WTC11 (cell line): ENCODE measurements at regions of chr14 and their contacts with region 1.

Region 1: DNA sequence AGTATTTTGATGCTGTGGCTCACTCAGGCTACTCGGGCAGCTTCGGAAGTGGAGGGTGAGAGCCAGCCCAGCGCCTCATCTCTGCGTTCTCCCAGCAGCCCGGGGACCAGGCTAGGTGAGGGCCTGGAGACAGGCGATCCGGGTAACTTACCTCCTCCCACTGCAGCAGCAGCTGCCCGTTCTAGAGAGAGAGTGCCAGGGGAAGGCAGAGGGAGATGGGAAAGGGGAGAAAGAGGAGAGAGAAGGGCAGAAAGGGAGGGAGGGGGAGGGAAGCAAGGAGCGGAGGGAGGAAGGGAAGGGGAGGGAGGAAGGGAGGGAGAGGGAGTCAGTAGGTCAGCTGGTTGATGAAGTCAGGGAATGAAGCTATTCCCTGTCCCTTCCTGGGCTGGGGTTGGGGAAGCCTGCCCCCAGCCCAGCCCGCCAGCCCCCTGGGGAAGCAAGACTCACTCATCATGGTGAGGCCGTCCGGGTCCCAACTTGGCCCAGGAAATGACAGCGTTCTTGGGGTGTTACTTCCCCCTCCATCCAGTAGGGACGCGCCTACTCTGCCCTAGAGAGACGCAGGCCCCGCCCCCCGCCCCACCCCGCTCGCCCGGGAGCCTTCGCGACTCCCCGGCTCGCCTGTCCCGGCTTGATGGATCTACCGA is at the start of gene IFI27L2:
- DNase-seq: peak; percentile 76
- ATAC-seq: peak; percentile 86
- H3K4me3 Mint-ChIP-seq: peak within 1 kb of the TSS; percentile 75
- H3K27ac Mint-ChIP-seq: peak within 1 kb of the TSS; percentile 86
- H3K4me1 Mint-ChIP-seq: peaks cover 11% of the 10 kb centered on the region
- H3K27me3 Mint-ChIP-seq: peaks cover 8% of the 10 kb centered on the region
- CTCF ChIP-seq: peak; percentile 19; the same call in 1 of the 2 replicates
- total RNA-seq, gene IFI27L2: 22.1 to 37.2 TPM (median 35.5 TPM) in 3 replicates

Region 2: DNA sequence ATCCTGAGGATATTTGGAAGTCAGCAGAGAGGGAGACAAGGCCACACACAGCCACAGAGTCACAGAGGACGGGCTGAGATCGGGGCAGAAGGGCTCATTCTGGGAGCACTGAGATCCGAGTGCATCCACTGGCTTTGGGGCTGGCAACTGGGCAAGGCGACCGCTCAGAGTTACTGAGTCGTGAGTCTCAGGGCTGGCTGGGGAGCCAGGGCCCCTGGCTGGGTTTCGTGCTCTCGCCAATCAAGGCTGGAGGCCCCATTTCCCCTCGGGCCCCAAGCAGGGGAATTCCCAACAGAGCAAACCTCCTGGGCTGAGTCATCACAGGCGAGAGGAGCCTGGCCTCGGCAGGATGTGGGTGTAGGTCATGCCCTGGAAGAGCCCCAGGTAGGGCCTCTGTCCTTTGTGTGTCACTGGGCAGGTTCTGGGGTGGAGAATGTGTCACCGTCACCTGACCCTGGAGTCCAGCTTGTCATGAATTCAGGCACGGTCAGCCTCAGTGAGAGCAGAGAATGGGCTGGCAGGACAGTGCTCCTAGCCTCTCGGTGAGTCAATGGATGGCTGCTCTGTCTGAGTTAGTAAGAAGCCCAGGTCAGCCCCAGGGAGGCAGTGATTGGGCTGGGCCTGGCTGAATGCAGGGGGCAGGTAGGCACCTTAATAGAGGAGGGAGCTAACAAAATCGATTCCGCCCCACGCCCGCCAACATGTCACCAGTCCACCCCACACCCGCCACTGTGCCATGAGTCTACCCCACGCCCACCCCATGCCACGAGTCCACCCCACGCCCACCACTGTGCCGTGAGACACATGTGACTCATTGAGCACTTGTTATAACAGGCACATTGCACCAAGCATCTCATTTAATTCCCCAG is 169.8 kb before region 1 on chr14:
- CTCF ChIA-PET with region 1: no interaction called
- POLR2A ChIA-PET with region 1: no interaction called
- DNase-seq: no peak
- ATAC-seq: peak; percentile 63
- H3K4me3 Mint-ChIP-seq: no peak overlapping the region
- H3K27ac Mint-ChIP-seq: peak overlapping the region; percentile 76; the same call in 1 of the 2 replicates
- H3K4me1 Mint-ChIP-seq: peaks cover 25% of the 10 kb centered on the region
- H3K27me3 Mint-ChIP-seq: no peaks in the 10 kb centered on the region
- CTCF ChIP-seq: no peak

Region 3: DNA sequence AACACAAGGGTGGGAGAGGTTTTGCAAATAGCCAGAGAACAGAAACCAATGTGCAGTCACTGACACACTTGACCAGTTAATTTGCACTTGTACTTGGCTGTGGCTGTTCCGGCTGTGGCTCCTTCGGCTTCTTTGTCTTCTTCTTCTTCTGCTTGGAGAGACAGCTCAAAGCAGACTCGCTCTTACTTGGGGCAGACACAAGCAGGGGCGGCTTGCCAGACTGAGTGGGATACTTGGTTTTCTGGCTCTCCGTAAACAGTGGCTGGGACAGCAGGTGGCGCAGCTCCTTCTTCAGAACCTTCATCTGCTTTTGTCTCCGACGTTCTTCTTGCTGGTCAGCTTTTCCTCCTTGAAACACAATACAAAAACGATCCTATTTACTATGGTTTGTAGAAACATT is 78.1 kb before region 1 on chr14:
- CTCF ChIA-PET with region 1: interaction called, 13 read pairs
- POLR2A ChIA-PET with region 1: interaction called, 3 read pairs
- DNase-seq: peak; percentile 50
- ATAC-seq: peak; percentile 81
- H3K4me3 Mint-ChIP-seq: no peak overlapping the region
- H3K27ac Mint-ChIP-seq: peak overlapping the region; percentile 17; the same call in 1 of the 2 replicates
- H3K4me1 Mint-ChIP-seq: peaks cover 11% of the 10 kb centered on the region
- H3K27me3 Mint-ChIP-seq: no peaks in the 10 kb centered on the region
- CTCF ChIP-seq: no peak

Region 4: GRCh38 chr14:94143239-94143638 is 14.0 kb after region 1 on chr14:
- CTCF ChIA-PET with region 1: interaction called, 22 read pairs
- POLR2A ChIA-PET with region 1: no interaction called
- DNase-seq: peak; percentile 62
- ATAC-seq: peak; percentile 78
- H3K4me3 Mint-ChIP-seq: no peak overlapping the region
- H3K27ac Mint-ChIP-seq: no peak overlapping the region
- H3K4me1 Mint-ChIP-seq: peaks cover 25% of the 10 kb centered on the region
- H3K27me3 Mint-ChIP-seq: no peaks in the 10 kb centered on the region
- CTCF ChIP-seq: 0 out of 2 replicates have a peak, but pooled peaks have one; percentile 15

Region 5: DNA sequence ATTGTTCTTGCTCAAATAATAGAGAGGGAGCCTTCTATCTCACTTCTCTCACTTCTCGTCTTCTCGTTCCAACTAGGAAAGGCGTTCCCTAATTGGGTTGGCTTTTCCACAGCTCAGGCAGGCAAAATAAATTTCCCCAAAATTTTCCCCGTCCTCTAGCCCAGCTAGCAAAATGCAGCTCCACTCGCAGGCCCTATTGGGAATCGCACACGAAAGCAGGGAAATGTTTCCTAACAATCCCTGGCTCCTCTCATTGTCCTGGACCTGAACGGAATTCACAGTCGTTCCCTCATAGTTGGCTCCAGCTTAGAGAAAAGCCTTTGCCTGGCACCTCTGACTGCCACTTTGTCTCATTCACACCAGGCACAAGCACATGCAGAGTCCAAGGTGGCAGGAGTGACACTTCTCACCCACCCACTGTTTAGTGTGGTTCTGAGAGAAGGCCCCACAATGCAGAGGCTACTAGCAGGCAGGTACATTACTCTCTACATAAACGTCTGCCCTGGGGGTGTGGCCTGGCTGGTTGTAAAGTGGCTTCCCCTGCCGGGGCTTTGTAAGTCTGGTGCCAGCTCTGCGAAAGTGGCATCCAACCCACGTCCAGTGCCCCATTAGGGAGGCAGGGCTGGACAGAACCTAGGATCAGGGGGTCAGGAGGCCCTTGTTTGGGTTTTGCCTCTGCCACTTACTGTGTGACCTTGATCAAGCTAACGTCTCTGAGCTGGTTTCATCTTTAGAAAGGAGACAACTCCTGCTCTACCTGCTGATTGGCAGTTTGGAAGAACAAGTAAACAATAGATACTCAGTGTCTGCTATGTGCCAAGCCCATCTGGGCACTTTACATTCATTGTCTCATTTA is 159.6 kb after region 1 on chr14:
- CTCF ChIA-PET with region 1: interaction called, 15 read pairs
- POLR2A ChIA-PET with region 1: no interaction called
- DNase-seq: no peak
- ATAC-seq: peak; percentile 84
- H3K4me3 Mint-ChIP-seq: no peak overlapping the region
- H3K27ac Mint-ChIP-seq: no peak overlapping the region
- H3K4me1 Mint-ChIP-seq: 0 out of 2 replicates have a peak, but pooled peaks cover 3% of the 10 kb centered on the region
- H3K27me3 Mint-ChIP-seq: no peaks in the 10 kb centered on the region
- CTCF ChIP-seq: no peak